ENCODE measurements at regions of chr10 and their contacts with region 1.

Region 1: DNA sequence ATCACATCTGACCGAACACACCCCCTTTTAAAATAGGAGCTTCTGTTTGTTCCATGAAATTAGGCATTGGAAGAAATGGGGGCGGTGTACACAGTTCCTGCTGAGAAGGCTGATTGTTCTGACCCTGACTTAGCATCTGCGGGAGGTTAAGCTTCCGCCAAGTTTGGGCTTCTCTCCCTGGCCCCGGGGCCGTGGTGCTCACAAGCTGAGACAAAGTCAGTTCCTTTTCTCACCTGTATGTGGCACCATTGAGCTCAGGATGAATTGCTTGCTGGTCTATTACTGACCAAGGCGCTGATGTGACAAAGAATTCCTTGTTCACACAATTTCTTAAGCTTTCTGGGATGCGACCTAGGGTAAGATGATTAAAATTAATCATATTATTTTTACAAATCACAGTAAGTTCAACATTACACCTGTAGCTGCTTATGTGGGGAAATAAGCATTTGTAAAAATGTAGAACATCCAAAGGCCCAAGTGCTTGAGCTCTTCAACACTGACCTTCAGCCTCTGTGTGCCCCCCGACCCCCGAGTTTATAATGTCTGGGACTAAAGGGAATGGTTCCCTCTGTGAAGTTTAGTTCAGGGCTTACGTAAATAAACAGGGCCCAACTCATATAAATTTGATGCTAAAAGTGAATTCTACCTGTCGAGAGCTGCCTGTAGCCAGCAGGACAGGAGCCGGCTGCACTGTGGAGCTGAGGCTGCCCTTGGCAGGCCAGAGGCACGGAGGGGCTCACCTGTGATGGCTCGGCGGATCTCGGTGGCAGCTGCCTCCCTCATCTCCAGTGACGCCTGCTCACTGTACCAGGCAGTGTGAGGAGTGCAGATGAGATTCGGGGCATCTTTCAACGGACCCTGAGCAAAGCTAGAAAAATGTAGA is 50.8 kb downstream of the ZRANB1 start:
- DNase-seq: peak; percentile 81
- H3K4me3 ChIP-seq: no peak overlapping the region
- CTCF ChIP-seq: peak; percentile 78

Region 2: DNA sequence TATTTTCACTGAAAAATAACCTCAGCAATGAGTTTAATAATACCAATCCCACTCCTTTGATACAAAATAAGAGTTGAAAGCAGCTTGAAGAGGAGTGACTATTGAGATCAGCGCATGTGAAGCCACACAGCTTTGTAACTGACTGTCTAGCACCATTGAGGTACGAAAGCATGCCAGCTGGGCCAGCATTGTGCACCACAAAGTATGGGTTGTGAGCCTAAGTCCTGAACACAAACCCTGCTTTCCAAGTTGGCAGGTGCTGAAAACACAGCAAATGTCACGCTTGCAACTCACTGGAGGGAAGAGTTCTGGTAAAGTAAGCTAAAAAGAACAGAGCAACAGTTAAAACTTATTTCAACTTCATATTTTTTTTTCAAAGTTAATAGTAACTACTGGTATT is 244.5 kb before region 1 on chr10:
- in situ Hi-C with region 1: no loop called
- DNase-seq: no peak
- H3K4me3 ChIP-seq: no peak overlapping the region
- CTCF ChIP-seq: no peak

Region 3: DNA sequence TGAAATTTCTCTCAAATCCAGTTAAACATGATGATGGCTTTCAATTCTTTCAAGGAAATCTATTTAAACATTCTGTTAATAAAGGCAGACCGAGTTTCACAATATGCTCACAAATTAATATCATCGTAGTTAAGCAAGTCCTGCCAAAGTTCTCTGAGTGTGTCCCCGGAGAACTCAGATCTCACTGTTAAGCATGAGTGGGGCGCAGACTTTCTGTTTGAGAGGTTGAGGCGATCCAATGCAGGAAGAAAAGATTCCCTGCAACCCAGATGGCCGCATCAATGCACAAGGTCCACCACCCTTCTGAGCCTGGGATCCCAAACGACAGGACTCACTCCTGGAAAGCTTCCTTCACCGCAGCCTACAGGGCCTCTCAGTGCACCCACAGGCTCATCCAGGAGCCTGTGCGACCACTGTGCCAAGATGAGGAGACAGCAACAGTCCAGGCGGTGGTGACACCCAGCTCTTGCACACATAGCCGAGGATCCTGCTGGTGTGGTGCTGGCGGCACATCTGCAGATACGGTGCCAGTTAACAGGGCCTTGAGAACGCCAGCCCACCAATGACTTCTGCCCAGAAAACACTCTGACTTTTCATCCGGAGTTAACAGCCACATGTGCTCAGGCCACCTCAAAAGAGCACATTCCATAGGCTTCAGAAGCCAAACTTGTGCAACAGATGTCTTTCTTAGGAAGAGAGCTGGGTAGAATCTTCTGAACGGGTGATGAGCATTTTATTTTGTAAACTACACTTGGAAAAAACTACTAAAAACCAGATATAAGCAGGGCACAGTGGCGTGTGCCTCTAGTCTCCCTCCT is 51.3 kb after region 1 on chr10:
- in situ Hi-C with region 1: loop called (anchors 5 kb)
- DNase-seq: no peak
- H3K4me3 ChIP-seq: no peak overlapping the region
- CTCF ChIP-seq: no peak

Region 4: DNA sequence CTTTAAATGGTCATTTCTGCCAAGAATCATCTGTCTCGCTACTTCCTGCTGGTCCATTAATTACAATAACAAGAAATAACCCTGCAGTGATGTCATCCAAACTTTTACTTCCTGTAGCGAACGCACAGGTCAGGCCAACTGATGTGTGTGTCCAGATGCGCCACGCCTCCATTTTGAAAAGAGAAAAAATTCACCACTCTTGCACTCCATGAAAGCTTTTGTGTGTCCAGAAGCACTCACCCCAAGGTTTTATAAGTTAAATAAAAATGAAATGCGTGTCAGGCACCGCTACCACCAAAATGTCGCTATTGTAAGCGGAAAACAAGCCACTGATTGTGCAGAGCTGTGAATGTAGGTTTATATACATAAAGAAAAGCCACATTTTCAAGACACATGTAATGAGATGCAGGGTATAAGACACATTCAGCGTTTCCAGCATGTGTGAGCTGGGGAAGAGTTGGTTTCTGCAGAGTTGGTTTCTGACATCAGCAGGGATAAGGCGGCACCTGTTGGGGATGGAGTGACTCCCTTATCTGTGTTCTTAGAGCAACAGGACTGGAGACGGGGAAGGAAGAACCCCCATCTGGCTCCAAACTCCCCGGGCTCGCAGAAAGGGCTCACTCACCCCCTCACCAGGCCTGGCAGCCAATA is 84.3 kb after region 1 on chr10:
- in situ Hi-C with region 1: loop called (anchors 5 kb)
- DNase-seq: no peak
- H3K4me3 ChIP-seq: no peak overlapping the region
- CTCF ChIP-seq: no peak

Region 5: DNA sequence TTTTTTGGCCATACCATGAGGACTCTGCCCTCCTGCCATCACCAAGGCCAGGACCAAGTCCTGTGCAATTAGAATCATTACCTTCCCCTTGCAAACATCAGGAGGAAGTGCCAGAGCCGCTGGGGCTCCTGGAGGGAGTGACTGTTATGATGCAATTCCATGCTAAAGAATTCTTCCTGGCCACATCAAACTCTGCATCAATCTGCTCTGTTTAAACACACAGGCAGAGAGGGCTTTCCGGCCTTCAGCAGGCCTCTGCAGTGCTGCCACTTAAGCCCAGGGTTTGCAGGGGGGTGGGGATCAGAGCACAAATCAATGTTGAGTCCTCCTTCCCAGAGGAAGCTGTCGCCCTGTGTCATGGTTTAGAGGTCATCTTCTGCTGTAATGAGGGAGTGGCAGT is 109.5 kb after region 1 on chr10:
- in situ Hi-C with region 1: no loop called
- DNase-seq: no peak
- H3K4me3 ChIP-seq: no peak overlapping the region
- CTCF ChIP-seq: no peak

Region 6: DNA sequence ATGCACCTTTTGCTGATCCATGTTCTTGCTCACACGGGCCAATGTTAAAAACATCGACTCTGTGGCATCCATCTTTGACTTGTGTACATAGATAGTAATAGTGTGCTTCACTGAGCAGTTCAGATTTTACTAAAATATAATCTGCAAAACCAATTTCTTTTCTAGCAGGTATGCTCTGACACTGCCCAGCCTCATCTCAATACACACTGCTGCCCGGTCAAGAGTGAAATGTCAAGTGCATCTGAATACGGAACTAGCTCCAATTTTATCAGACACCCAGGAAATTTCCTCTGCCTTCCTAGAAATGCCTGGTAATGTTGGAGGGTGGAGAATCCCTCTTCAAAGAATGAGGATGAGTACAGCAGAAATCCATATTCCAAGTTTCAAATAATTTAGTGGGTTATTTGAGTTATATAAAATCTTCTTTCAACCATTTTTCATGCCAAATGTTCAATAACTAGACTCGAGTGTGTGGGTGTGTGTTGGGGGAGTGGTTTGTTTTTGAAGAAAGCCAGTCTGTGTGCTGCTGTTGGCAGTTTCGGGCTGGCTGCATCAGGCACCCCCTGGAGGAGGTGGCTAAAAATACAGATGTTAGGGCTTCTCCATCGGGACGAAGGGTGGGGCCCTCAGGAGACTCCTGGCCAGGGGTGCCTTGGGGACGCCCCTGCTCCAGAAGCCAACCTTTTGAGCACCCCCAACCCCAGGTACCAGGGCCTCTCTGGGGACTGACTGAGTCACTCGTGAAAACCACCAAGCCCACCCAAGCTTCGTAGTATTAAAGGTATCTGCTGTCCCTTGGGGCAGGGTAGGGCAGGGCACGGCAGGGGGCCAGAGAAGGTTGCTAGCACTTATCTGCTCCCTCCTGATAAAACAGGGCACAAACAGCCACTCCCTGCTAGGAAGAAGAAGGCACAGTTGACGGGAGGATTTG is 152.3 kb after region 1 on chr10:
- in situ Hi-C with region 1: loop called (anchors 5 kb)
- DNase-seq: no peak
- H3K4me3 ChIP-seq: no peak overlapping the region
- CTCF ChIP-seq: peak; percentile 53

Region 7: DNA sequence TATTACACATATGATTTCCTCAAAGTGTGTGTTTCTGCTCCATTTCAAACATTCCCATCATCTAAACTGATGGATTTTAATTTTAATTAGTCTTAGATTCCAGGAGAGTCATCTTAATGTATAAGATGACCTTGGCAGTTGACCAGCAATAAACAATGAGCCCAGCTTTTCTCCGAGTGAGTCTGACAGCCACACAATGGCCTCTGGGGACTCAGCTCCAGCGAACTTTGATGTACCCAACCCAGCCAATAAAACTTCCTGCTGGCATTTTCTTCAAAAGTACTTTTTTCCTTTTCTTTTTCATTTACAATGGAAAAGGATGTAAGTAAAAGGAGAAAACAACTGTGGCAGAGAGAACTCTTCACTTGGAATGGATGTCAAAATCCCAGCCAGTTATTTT is 306.8 kb after region 1 on chr10:
- in situ Hi-C with region 1: no loop called
- DNase-seq: no peak
- H3K4me3 ChIP-seq: no peak overlapping the region
- CTCF ChIP-seq: no peak